ENCODE measurements at regions of chr9 and their contacts with region 1.

Region 1: DNA sequence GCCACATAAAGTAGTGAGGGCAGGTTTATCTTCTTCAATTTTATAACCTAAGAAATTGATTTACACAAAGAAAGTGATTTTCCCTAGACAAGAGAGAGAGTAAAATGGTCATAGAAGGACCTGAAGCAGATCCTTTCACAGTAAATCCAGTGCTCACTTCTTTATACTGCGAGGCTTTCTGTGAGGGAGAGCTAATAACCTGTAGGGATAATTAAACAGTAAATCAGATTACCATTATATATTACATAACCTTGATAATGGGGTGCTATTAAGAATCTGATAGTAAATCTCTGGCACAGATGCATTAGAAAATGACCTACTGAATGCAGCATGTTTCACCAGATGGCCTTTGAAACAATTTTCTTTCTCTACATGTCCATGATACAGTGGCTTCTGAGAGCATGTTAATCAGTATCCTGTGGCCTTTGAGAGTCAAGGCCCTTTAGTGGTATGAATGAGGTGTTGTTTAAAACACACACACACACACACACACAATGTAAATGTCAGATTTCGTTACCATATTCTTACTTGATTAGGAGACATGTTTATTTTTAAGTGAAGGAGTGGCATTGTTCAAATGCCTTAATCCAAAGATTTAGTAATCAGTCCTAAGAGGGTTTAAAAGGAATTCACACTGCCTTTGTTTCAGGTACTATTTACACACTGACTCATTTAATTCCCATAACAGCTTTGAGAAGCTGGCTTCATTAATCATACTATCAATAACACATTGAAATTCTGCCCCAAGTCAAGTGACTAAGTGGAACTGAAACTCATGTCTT is 124.7 kb downstream of the ALDH1A1 start:
- DNase-seq: no peak
- H3K4me3 ChIP-seq: no peak overlapping the region
- H3K27ac ChIP-seq: no peak overlapping the region
- H3K4me1 ChIP-seq: peaks cover 0 to 3% (median 0%) of the 10 kb centered on the region in 4 experiments; a peak in 1 of 7 replicates
- H3K27me3 ChIP-seq: no peaks in the 10 kb centered on the region
- CTCF ChIP-seq: no peak
- EP300 ChIP-seq: no peak
- POLR2A ChIP-seq: no peak
- RAD21 ChIP-seq: no peak

Region 2: DNA sequence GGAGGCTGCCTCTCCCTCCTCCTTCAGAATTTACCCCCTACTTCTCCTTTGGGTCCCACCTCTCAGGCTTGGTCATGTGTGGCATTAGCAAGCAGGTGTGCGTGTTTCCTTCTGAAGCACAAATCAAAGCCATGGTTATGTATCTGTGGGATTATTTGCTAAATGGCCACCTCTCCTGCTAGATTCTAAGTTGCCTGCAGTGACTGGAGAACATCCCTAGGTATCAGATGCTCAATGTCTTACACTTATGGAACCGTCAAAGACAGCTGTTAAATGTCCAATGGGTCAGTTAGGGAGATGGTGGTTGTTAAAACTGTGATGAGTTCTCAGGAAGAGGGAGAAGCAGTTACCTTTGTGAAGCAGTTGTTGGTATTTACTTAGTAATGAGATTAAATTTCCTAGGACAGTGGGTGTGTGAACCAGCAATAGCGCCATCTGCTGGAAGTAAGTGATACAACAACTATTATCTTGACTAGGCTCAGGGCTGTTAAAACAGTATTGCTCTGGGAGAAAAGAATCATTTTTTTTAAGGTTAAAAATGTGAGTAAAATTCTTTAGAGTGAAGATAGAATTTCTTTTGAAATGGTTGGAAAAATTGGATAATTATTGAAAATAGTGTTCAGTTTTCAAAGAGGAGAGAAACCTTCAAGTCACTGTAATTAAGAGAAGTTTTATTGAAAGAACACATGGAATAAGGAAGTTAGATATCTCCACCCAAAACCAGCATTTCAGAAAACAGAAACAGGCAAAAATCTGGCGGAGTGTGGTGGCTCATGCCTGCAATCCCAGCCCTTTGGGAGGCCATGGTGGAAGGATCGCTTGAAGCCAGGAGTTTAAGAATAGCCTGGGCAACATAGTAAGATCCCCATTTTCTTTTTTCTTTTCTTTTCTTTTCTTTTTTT is 235.4 kb before region 1 on chr9:
- CTCF ChIA-PET with region 1: interaction called, 13 read pairs
- POLR2A ChIA-PET with region 1: no interaction called
- DNase-seq: peak in 1 of 2 experiments; percentile 46
- H3K4me3 ChIP-seq: no peak overlapping the region
- H3K27ac ChIP-seq: no peak overlapping the region
- H3K4me1 ChIP-seq: peaks cover 0 to 4% (median 0%) of the 10 kb centered on the region in 4 experiments; a peak in 2 of 7 replicates
- H3K27me3 ChIP-seq: no peaks in the 10 kb centered on the region
- CTCF ChIP-seq: peak in 2 of 3 experiments; percentile 59 to 68; a peak in 3 of 4 replicates
- EP300 ChIP-seq: no peak
- POLR2A ChIP-seq: no peak
- RAD21 ChIP-seq: peak; percentile 82 to 84

Region 3: GRCh38 chr9:72839085-72839484 is 10.9 kb after region 1 on chr9:
- CTCF ChIA-PET with region 1: no interaction called
- POLR2A ChIA-PET with region 1: no interaction called
- DNase-seq: no peak
- H3K4me3 ChIP-seq: no peak overlapping the region
- H3K27ac ChIP-seq: no peak overlapping the region
- H3K4me1 ChIP-seq: peaks cover 0 to 4% (median 2%) of the 10 kb centered on the region in 4 experiments; a peak in 4 of 7 replicates
- H3K27me3 ChIP-seq: no peaks in the 10 kb centered on the region
- CTCF ChIP-seq: no peak
- EP300 ChIP-seq: no peak
- POLR2A ChIP-seq: no peak
- RAD21 ChIP-seq: no peak